GM12878 (cell line): ENCODE measurements at regions of chr2 and their contacts with region 1.

Region 1: DNA sequence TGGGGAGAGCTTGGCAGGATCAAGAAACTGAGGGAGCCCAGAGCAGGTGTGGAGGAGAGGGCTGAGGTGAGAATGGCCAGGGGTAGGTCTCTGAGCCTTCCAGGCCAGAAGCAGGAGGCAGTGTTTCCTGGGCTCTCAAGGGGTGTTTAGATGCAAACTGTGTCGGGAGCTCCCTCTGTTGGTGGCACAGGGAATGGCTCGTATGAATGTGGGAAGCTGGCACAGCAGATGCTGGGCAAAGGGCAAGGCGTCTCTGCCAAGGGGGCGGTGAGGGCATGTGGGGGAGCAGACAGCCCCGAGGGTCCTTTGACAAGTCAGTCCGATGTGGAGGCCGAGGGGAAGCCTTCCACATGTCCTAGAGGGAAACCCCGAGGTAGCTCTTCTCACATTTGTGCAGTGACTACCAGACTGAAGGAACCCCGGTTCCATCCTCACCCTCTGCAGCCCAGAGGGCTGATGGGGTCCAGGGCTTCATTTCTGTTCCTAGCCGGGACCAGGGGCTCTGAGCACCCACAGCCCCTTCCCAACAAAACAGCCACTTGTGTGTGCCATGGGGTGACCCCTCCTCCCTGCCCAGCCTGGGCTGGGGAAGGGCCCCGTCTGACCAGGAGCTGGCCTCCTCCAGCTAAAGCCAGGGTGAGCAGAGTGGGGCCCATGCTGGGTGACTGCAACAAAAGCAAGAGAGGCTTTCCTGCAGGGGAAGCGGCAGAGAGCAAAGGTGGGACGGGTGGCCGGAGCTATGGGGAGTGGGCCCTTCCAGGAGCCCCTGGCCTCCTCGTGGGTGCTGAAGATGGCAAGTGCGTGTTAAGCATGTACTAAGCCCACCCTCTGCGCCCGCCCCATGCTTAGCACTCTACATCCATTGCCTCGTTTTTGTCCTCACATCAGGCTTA is 103.4 kb downstream of the SEPTIN10 start:
- DNase-seq: peak; percentile 27
- ATAC-seq: peak; percentile 53
- H3K4me3 ChIP-seq: no peak overlapping the region
- H3K27ac ChIP-seq: no peak overlapping the region
- H3K4me1 ChIP-seq: peaks cover 38% of the 10 kb centered on the region
- H3K27me3 ChIP-seq: no peaks in the 10 kb centered on the region
- CTCF ChIP-seq: peak; percentile 94 to 98 (median 96)
- EP300 ChIP-seq: no peak
- POLR2A ChIP-seq: no peak
- RAD21 ChIP-seq: peak; percentile 92

Region 2: GRCh38 chr2:108855194-108855593 is 655.2 kb before region 1 on chr2:
- CTCF ChIA-PET with region 1: interaction called, 5 read pairs
- POLR2A ChIA-PET with region 1: no interaction called
- RAD21 ChIA-PET with region 1: interaction called, 4 read pairs
- SMC1A ChIA-PET with region 1: interaction called, 3 read pairs
- in situ Hi-C with region 1: no loop called
- intact Hi-C with region 1: loop called (anchors 1 kb)
- DNase-seq: no peak
- ATAC-seq: peak; percentile 79
- H3K4me3 ChIP-seq: no peak overlapping the region
- H3K27ac ChIP-seq: no peak overlapping the region; the same call in 1 of the 2 replicates
- H3K4me1 ChIP-seq: no peaks in the 10 kb centered on the region
- H3K27me3 ChIP-seq: no peaks in the 10 kb centered on the region
- CTCF ChIP-seq: peak in 1 of 3 experiments; percentile 31; a peak in 2 of 6 replicates
- EP300 ChIP-seq: no peak
- POLR2A ChIP-seq: no peak
- RAD21 ChIP-seq: peak; percentile 43

Region 3: GRCh38 chr2:109046925-109047508 is 463.4 kb before region 1 on chr2:
- CTCF ChIA-PET with region 1: interaction called, 4 read pairs
- POLR2A ChIA-PET with region 1: no interaction called
- RAD21 ChIA-PET with region 1: interaction called, 15 read pairs
- SMC1A ChIA-PET with region 1: interaction called, 5 read pairs
- in situ Hi-C with region 1: no loop called
- intact Hi-C with region 1: loop called (anchors 10 kb)
- DNase-seq: peak; percentile 30
- ATAC-seq: peak; percentile 95
- H3K4me3 ChIP-seq: no peak overlapping the region
- H3K27ac ChIP-seq: no peak overlapping the region
- H3K4me1 ChIP-seq: no peaks in the 10 kb centered on the region
- H3K27me3 ChIP-seq: no peaks in the 10 kb centered on the region
- CTCF ChIP-seq: peak in 2 of 3 experiments; percentile 7 to 22; a peak in 2 of 6 replicates
- EP300 ChIP-seq: peak in 1 of 2 experiments; percentile 60; a peak in 1 of 4 replicates
- POLR2A ChIP-seq: no peak
- RAD21 ChIP-seq: no peak

Region 4: DNA sequence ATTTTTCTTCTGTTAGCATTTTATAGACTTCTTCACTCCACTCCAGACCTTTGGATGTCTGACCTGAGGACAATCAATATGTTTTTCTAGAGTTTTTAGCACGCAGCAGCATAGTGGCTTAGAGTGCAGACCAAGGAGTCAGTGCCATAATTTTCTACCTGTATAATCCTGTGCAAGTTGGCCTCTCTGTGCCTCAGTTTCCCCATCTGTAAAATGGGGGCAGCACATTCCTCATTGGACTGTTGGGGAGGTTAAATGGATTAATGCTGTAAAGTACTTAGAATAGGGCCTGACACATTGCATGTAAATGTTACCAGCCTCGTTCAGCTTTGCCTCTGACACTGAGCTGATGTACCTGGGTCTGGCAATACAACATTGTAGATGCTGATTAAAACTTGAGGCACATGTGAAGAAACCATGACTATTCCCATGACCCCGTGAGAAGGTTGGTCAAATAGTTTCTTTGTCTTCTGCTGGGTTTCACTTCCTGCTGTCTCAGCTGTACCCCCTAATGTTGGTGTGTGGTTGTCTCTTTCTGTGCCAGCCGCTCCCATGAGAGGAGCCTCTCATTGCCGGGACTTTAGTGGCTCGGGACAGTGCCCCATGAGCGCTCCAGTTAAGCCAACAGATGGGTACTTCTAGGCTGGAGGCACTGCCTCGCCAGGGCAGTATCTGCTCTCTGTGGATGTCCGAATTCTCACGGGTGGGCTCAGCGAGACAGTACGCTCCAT is 256.0 kb before region 1 on chr2:
- CTCF ChIA-PET with region 1: interaction called, 5 read pairs
- POLR2A ChIA-PET with region 1: no interaction called
- RAD21 ChIA-PET with region 1: no interaction called
- SMC1A ChIA-PET with region 1: interaction called, 5 read pairs
- in situ Hi-C with region 1: no loop called
- intact Hi-C with region 1: loop called (anchors 5 kb)
- DNase-seq: peak; percentile 94
- ATAC-seq: peak; percentile 84
- H3K4me3 ChIP-seq: no peak overlapping the region
- H3K27ac ChIP-seq: peak overlapping the region; percentile 62
- H3K4me1 ChIP-seq: peaks cover 29% of the 10 kb centered on the region
- H3K27me3 ChIP-seq: no peaks in the 10 kb centered on the region
- CTCF ChIP-seq: no peak
- EP300 ChIP-seq: peak; percentile 23 to 27; a peak in 1 of 4 replicates
- POLR2A ChIP-seq: no peak
- RAD21 ChIP-seq: no peak

Region 5: GRCh38 chr2:109396202-109397180 is 113.9 kb before region 1 on chr2:
- CTCF ChIA-PET with region 1: interaction called, 3 read pairs
- POLR2A ChIA-PET with region 1: no interaction called
- RAD21 ChIA-PET with region 1: interaction called, 4 read pairs
- SMC1A ChIA-PET with region 1: interaction called, 3 read pairs
- in situ Hi-C with region 1: no loop called
- intact Hi-C with region 1: loop called (anchors 5 kb)
- DNase-seq: no peak
- ATAC-seq: peak; percentile 87
- H3K4me3 ChIP-seq: no peak overlapping the region
- H3K27ac ChIP-seq: no peak overlapping the region
- H3K4me1 ChIP-seq: no peaks in the 10 kb centered on the region; the same call in 1 of the 2 replicates
- H3K27me3 ChIP-seq: no peaks in the 10 kb centered on the region
- CTCF ChIP-seq: no peak
- EP300 ChIP-seq: no peak; a peak in 1 of 4 replicates
- POLR2A ChIP-seq: no peak
- RAD21 ChIP-seq: no peak